OCI-LY7 (cell line): ENCODE measurements at regions of chr6 and their contacts with region 1.

Region 1: GRCh38 chr6:37691904-37692806 is 5.5 kb downstream of the MDGA1 start:
- DNase-seq: peak; percentile 73
- H3K4me3 ChIP-seq: no peak overlapping the region
- H3K27ac ChIP-seq: no peak overlapping the region
- H3K4me1 ChIP-seq: peaks cover 6% of the 10 kb centered on the region
- CTCF ChIP-seq: peak; percentile 92

Region 2: DNA sequence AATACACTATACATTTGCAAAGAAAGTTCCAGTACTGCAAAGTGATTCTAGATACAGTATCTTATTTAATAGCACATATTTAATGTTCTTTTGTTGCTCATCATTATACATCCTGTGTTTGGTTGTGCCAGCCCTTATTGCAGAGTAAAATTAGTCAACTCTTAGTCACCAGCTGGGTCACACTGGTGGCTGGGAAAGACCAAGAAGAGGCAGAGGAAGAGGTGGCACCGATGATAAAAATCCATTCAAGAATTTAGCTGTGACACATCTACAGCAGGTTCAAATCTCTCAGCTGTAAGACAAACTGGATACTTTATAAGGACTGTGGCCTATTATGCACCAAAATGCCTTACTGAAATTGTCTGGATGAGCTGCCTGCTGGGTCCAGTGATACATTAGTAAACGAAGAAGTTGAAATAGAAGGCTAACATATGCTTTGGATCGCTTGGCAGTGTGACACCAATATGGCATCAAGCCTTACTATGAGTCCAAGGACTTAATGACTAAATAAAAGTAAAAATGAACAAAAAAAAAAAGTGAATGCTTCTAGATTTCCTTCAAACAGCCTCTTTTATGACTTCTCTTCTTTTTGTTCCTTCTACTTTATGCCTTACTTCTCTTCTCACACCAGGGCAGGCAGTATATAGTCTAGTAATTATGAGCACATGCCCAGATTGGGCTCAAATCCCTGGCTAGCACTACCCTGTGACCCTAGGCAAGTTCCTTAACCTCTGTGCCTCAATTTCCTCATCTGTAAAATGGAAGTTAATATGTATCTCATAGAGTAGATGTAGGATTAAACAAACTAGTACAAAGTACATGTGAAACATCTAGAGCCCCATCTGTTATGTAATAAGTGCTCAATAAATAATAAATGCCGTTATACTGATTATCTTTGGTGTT is 367.8 kb before region 1 on chr6:
- CTCF ChIA-PET with region 1: no interaction called
- POLR2A ChIA-PET with region 1: no interaction called
- intact Hi-C with region 1: loop called (anchors 1 kb)
- DNase-seq: no peak
- H3K4me3 ChIP-seq: no peak overlapping the region
- H3K27ac ChIP-seq: no peak overlapping the region
- H3K4me1 ChIP-seq: no peaks in the 10 kb centered on the region
- CTCF ChIP-seq: no peak

Region 3: DNA sequence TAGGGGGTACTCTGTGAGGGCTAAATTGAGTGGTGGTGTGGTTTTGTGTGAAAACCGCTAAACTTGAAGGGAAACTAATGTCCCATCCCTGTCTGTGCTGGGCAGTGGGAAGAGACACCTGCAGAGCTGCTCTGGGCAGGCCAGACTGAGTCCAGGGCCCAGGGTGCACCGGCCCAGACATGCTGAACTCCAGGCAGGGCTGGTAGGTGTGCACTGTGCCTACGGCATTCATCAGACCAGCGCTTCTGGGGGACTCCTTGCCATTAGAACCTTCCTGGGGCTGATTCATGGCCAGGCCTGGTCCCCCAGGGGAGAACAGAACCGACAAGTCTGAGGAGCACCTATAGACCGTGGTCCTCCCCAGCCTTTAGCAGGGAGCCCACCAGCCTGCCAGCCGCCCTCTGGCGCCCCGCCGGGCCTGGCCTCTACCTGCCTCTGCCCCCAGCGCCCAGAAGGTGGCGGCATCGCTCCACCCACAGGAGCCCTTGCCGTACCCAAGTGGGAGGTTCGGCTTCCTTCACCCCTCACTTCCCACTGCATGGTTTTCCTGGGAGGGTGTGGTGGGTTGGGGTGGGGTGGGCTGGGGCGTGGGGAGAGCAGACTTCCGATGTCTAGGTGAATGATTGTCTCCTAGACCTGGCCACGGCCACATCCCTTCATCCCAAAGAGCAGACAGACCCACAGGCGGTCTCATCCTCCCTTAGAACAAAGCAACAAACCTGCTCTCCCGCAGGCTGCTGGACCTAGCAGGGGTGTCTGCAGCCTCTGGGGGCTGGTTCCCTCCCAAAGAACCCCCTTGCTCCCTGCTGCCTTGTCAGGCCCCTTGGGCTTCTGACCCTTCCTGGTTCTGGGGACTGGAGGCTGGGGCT is 208.0 kb before region 1 on chr6:
- CTCF ChIA-PET with region 1: no interaction called
- POLR2A ChIA-PET with region 1: interaction called, 4 read pairs
- intact Hi-C with region 1: loop called (anchors 1 kb)
- DNase-seq: peak; percentile 59
- H3K4me3 ChIP-seq: no peak overlapping the region
- H3K27ac ChIP-seq: no peak overlapping the region
- H3K4me1 ChIP-seq: no peaks in the 10 kb centered on the region
- CTCF ChIP-seq: peak; percentile 80

Region 4: GRCh38 chr6:37566111-37566949 is 125.8 kb before region 1 on chr6:
- CTCF ChIA-PET with region 1: no interaction called
- POLR2A ChIA-PET with region 1: interaction called, 3 read pairs
- intact Hi-C with region 1: loop called (anchors 2 kb)
- DNase-seq: peak; percentile 51
- H3K4me3 ChIP-seq: no peak overlapping the region
- H3K27ac ChIP-seq: no peak overlapping the region
- H3K4me1 ChIP-seq: peaks cover 41% of the 10 kb centered on the region
- CTCF ChIP-seq: peak; percentile 90

Region 5: DNA sequence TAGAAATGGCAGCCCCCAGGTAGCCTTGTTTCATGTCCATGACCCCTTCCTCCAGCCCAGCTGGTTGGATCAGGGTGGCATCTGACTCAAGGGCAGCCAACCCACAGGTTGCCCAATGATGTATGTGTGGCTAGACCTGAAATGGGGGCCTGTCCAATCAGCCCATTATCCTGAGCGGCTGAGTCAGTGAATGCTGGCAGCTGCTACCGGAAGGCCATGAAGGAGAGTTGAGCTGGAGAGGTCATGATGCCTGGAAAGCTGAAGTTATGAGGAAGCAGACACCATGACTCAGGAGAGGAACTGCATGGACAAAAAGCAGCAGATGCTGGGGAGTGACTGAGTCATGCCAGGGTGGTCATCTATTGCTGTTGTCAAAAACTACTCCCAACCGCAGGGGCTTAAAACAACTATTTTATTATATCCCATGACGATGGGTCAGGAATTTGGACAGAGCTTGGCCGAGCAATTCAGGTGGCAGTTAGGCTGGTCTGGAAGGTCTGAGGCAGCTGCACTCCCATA is 61.8 kb before region 1 on chr6:
- CTCF ChIA-PET with region 1: no interaction called
- POLR2A ChIA-PET with region 1: no interaction called
- intact Hi-C with region 1: loop called (anchors 2 kb)
- DNase-seq: no peak
- H3K4me3 ChIP-seq: no peak overlapping the region
- H3K27ac ChIP-seq: no peak overlapping the region
- H3K4me1 ChIP-seq: peaks cover 21% of the 10 kb centered on the region
- CTCF ChIP-seq: no peak